A673 (cell line): ENCODE measurements at regions of chr5 and their contacts with region 1.

Region 1: GRCh38 chr5:133325864-133326263 is 274.1 kb downstream of the HSPA4 start:
- DNase-seq: no peak
- H3K4me3 ChIP-seq: no peak overlapping the region
- H3K27ac ChIP-seq: no peak overlapping the region
- H3K4me1 ChIP-seq: no peaks in the 10 kb centered on the region
- H3K27me3 ChIP-seq: no peaks in the 10 kb centered on the region
- CTCF ChIP-seq: no peak

Region 2: DNA sequence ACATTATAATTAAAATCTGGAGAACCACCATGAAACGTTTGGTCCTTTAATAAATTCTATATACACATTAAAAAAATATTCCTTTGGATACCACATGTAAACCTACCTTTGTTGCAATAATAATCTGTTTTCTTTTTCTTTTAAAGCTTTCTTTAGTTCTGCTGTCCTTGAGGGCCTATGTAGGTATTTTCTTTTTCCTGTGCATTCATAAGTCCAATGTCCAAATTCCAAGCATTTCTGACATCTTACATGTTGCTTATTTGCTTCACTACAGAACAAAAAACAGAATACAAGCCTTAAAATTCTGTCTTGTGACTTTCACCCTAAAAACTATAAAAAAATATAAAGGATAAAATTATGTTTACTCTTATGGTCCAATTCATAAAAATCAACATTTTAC is 319.2 kb before region 1 on chr5:
- CTCF ChIA-PET with region 1: no interaction called
- POLR2A ChIA-PET with region 1: interaction called, 13 read pairs
- intact Hi-C with region 1: no loop called
- DNase-seq: no peak
- H3K4me3 ChIP-seq: no peak overlapping the region
- H3K27ac ChIP-seq: no peak overlapping the region
- H3K4me1 ChIP-seq: no peaks in the 10 kb centered on the region
- H3K27me3 ChIP-seq: no peaks in the 10 kb centered on the region
- CTCF ChIP-seq: no peak

Region 3: DNA sequence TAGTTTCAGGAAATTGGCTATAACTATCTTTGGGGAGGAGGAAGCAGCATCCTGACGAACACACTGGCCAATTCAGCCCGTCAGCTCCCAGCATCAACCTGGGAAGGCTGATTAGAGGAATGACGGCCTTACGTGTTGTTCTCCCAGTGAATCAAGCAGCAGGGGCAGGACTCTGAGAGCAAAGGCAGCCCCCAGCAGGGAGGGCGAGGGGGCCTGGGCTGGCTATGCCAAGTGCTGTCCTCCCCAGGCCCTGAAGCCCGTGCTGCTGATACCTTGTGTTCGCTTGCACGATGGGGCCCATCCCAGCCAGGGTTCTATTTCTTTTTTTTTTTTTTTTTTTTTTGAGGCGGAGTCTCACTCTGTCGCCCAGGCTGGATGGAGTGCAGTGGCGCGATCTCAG is 32.4 kb after region 1 on chr5:
- CTCF ChIA-PET with region 1: no interaction called
- POLR2A ChIA-PET with region 1: interaction called, 13 read pairs
- intact Hi-C with region 1: no loop called
- DNase-seq: no peak
- H3K4me3 ChIP-seq: no peak overlapping the region
- H3K27ac ChIP-seq: no peak overlapping the region
- H3K4me1 ChIP-seq: no peaks in the 10 kb centered on the region
- H3K27me3 ChIP-seq: peaks cover 3% of the 10 kb centered on the region
- CTCF ChIP-seq: no peak